MCF 10A (cell line): ENCODE measurements at regions of chr18 and their contacts with region 1.

Region 1: DNA sequence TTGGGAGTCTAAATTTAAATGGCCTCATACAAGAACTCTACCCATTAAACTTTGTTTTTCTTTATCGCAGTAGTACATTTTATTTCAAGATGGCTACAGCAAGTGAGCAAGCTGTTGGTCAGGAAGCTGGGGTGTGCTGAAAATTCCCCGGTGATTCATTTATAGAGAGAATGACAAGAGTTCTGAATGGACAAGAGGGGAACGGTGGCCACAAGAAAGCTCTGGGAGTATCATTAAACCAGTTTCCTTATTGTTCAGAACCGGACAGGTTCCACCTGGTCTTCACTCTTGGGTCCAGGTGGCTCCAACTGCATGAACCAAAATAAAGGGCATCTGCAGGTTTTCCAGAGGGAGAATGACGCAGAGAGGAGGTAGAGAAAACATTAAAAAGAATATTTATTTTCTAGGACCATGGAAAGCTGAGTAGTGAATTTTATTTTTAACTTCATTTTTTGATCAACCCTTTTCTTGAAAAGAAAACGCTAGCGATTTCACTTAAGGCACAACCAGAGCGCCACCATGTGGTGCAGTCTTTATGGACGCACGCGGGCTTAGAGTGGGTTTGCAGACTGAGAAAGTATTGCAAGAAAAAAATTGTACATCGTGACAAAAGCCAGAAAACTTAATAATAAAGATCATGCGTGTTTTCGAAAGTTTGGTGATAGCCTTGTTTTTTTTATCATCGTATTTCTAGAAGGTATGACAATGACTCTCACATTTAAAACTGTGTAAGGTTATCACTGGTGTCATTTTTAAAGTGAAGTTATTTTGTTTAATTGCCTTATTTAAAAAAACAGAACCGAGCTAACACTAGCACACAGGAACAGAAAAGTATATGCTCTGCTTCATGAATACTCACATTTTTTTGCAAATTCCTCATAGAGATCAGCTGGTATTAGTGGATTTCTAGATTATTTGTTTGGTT is 97.9 kb upstream of the NOL4 start:
- DNase-seq: peak; percentile 62
- H3K4me3 Mint-ChIP-seq: no peak overlapping the region
- H3K27ac Mint-ChIP-seq: no peak overlapping the region
- H3K4me1 Mint-ChIP-seq: no peaks in the 10 kb centered on the region
- H3K27me3 Mint-ChIP-seq: no peaks in the 10 kb centered on the region
- CTCF ChIP-seq: peak; percentile 33

Region 2: DNA sequence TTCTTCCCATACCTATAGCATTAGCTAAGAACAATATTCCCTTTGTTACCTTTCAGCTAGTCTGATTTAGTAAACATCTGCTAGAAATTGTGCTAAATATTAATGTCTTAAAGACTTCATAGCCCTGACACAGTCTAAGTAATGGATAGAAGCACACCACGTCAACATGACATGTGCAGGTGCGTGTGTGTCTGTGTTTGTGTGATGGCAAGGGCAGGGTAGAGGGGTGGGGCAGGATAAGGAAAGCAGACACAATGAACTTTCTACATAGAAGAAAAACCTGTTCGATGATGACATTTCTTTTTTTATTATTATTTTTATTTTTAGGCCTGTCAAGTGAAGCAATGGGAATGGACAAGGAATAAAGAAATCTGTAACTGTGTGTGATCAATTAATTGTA is 321.3 kb before region 1 on chr18:
- CTCF ChIA-PET with region 1: no interaction called
- POLR2A ChIA-PET with region 1: no interaction called
- intact Hi-C with region 1: no loop called
- DNase-seq: no peak
- H3K4me3 Mint-ChIP-seq: no peak overlapping the region
- H3K27ac Mint-ChIP-seq: no peak overlapping the region
- H3K4me1 Mint-ChIP-seq: no peaks in the 10 kb centered on the region
- H3K27me3 Mint-ChIP-seq: no peaks in the 10 kb centered on the region
- CTCF ChIP-seq: no peak

Region 3: DNA sequence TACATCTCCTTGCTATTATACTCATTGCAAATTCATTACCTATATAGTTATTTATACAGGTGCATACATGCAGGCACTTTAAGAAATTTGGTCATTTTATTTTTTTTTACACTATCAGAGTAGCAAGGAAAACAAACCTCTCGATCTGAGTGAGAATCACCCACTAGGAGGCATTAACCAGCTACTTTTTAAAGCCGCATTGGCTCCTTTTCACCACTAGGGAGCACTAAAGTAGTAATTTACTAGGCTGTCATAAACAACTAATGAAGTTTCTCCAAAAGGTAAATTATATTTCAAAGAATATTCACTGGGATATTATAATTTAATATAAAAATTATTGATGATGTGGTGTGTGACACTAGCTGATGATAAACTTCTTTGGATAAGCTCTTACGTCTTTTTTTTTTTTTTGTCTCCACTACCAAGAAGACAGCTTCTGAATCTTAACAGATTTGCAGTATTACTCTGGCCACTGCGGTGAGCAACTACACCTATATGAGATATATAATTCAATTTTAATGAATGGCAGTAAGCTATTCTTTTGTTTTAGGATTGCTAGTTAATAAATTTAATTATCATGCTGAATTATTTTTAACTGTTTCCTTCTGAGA is 199.8 kb before region 1 on chr18:
- CTCF ChIA-PET with region 1: interaction called, 33 read pairs
- POLR2A ChIA-PET with region 1: no interaction called
- intact Hi-C with region 1: no loop called
- DNase-seq: peak; percentile 63
- H3K4me3 Mint-ChIP-seq: no peak overlapping the region
- H3K27ac Mint-ChIP-seq: no peak overlapping the region
- H3K4me1 Mint-ChIP-seq: peaks cover 5% of the 10 kb centered on the region
- H3K27me3 Mint-ChIP-seq: no peaks in the 10 kb centered on the region
- CTCF ChIP-seq: peak; percentile 76